ENCODE measurements at regions of chr6 and their contacts with region 1.

Region 1: GRCh38 chr6:31827286-31828079 is at the start of gene HSPA1B:
- DNase-seq: peak; percentile 100
- H3K4me3 Mint-ChIP-seq: peak within 1 kb of the TSS; percentile 80
- H3K27ac Mint-ChIP-seq: peak within 1 kb of the TSS; percentile 100
- H3K4me1 Mint-ChIP-seq: peaks cover 45% of the 10 kb centered on the region
- H3K27me3 Mint-ChIP-seq: peaks cover 13% of the 10 kb centered on the region
- CTCF ChIP-seq: no peak
- total RNA-seq, gene HSPA1B: 687 and 705 TPM in 2 replicates

Region 2: GRCh38 chr6:31680840-31681671 is 146.4 kb before region 1 on chr6 and contains the start of gene LY6G5C:
- CTCF ChIA-PET with region 1: no interaction called
- intact Hi-C with region 1: loop called (anchors 2 kb)
- DNase-seq: peak; percentile 94
- H3K4me3 Mint-ChIP-seq: peak within 1 kb of the TSS; percentile 75
- H3K27ac Mint-ChIP-seq: peak within 1 kb of the TSS; percentile 89
- H3K4me1 Mint-ChIP-seq: peaks cover 28% of the 10 kb centered on the region
- H3K27me3 Mint-ChIP-seq: no peaks in the 10 kb centered on the region
- CTCF ChIP-seq: peak; percentile 83
- total RNA-seq, gene LY6G5C: 4.9 and 5.4 TPM in 2 replicates

Region 3: GRCh38 chr6:31806465-31807272 is 20.8 kb before region 1 on chr6 and contains the start of gene LSM2:
- CTCF ChIA-PET with region 1: interaction called, 25 read pairs
- intact Hi-C with region 1: no loop called
- DNase-seq: peak; percentile 100
- H3K4me3 Mint-ChIP-seq: peak within 1 kb of the TSS; percentile 99
- H3K27ac Mint-ChIP-seq: peak within 1 kb of the TSS; percentile 96
- H3K4me1 Mint-ChIP-seq: peaks cover 19% of the 10 kb centered on the region
- H3K27me3 Mint-ChIP-seq: no peaks in the 10 kb centered on the region
- CTCF ChIP-seq: peak; percentile 89
- total RNA-seq, gene LSM2: 126 and 144 TPM in 2 replicates

Region 4: GRCh38 chr6:31815025-31815838 is 12.3 kb before region 1 on chr6 and contains the starts of genes HSPA1A and HSPA1L:
- CTCF ChIA-PET with region 1: interaction called, 10 read pairs
- intact Hi-C with region 1: no loop called
- DNase-seq: peak; percentile 100
- H3K4me3 Mint-ChIP-seq: peak within 1 kb of the TSS; percentile 79
- H3K27ac Mint-ChIP-seq: peak within 1 kb of the TSS; percentile 97
- H3K4me1 Mint-ChIP-seq: peaks cover 25% of the 10 kb centered on the region
- H3K27me3 Mint-ChIP-seq: no peaks in the 10 kb centered on the region
- CTCF ChIP-seq: no peak
- total RNA-seq, gene HSPA1A: 1,238 and 1,263 TPM in 2 replicates
- total RNA-seq, gene HSPA1L: 4.2 and 4.3 TPM in 2 replicates

Measured in Calu3 (cell line).